Left ventricle myocardium inferior (tissue), 1 donor: ENCODE measurements at regions of chr3 and their contacts with region 1.

Region 1: DNA sequence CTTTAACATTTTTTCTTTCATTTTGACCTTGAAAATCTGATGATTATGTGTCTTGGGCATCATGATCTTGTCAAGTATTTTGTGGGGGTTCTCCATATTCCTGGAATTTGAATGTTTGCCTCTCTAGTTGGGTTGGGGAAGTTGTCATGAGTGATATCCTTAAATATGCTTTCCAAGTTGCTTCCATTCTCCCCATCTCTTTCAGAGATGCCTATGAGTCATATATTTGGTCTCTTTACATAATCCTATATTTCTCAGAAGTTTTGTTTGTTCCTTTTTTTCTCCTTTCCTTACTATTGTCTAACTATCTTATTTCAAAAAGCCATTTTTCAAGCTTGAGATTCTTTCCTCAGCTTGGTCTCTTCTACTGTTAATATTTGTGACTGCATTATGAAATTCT is 69.0 kb upstream of the CCDC80 start:
- DNase-seq: no peak
- H3K4me3 ChIP-seq: no peak overlapping the region
- H3K27ac ChIP-seq: no peak overlapping the region
- H3K4me1 ChIP-seq: no peaks in the 10 kb centered on the region
- H3K27me3 ChIP-seq: no peaks in the 10 kb centered on the region
- CTCF ChIP-seq: no peak

Region 2: GRCh38 chr3:112653881-112654300 is 56.0 kb before region 1 on chr3:
- intact Hi-C with region 1: loop called (anchors 2 kb)
- DNase-seq: peak; percentile 69
- H3K4me3 ChIP-seq: no peak overlapping the region
- H3K27ac ChIP-seq: peak overlapping the region; percentile 73
- H3K4me1 ChIP-seq: peaks cover 10% of the 10 kb centered on the region
- H3K27me3 ChIP-seq: no peaks in the 10 kb centered on the region
- CTCF ChIP-seq: no peak